A549 (cell line): ENCODE measurements at regions of chr17 and their contacts with region 1.

Region 1: GRCh38 chr17:36629252-36629847 is 28.0 kb downstream of the MRM1 start:
- DNase-seq: peak; percentile 81 to 90
- ATAC-seq: peak; percentile 87 to 95
- H3K4me3 ChIP-seq: no peak overlapping the region
- H3K27ac ChIP-seq: 0 out of 6 replicates have a peak overlapping the region, but pooled peaks of 1 of the 2 experiments have one; percentile 26
- H3K4me1 ChIP-seq: no peaks in the 10 kb centered on the region
- CTCF ChIP-seq: peak; percentile 96
- EP300 ChIP-seq: no peak
- POLR2A ChIP-seq: no peak
- RAD21 ChIP-seq: peak; percentile 98 to 99

Region 2: GRCh38 chr17:36545465-36546417 is 83.6 kb before region 1 on chr17:
- CTCF ChIA-PET with region 1: no interaction called
- POLR2A ChIA-PET with region 1: no interaction called
- DNase-seq: peak; percentile 98 to 99
- ATAC-seq: peak; percentile 83 to 89
- H3K4me3 ChIP-seq: peak overlapping the region; percentile 81
- H3K27ac ChIP-seq: peak overlapping the region; percentile 96 to 97
- H3K4me1 ChIP-seq: peaks cover 28% of the 10 kb centered on the region
- CTCF ChIP-seq: no peak
- EP300 ChIP-seq: no peak
- POLR2A ChIP-seq: peak; percentile 44
- RAD21 ChIP-seq: no peak

Region 3: DNA sequence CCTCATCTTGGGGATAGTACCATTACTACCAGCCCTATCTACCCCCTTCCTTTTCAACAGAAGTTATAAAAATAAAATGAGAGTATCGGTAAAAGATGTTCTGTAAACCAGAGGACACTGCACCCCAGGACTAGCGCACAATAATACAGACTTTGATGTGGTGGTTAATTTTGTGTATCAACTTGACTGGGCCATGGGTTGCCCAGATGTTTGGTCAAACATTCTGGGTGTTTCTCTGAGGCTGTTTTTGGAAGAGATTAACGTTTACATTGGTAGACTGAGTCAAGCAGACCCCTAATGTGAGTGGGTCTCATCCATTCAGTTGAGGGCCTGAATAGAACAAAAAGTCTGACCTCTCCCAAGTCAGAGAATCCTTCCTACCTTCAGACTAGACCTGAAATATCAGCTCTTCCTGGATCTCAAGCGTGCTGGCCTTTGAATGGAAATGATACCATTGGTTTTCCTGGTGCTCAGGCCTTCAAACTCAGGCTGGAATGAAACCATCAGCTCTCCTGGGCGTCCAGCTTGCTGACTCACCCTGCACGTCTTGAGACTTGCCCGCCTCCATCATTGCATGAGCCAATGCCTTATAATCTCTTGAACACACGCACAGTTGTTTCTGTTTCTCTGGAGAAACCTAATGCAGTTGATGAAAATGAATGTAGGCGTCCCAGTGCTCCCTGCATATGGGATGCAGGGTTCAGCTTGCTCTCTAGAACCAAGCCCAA is 17.8 kb before region 1 on chr17:
- CTCF ChIA-PET with region 1: interaction called, 112 read pairs
- POLR2A ChIA-PET with region 1: no interaction called
- DNase-seq: peak in 1 of 2 experiments; percentile 61
- ATAC-seq: peak in 1 of 2 experiments; percentile 33; a peak in 2 of 6 replicates
- H3K4me3 ChIP-seq: no peak overlapping the region
- H3K27ac ChIP-seq: peak overlapping the region in 1 of 2 experiments; percentile 27; a peak in 1 of 6 replicates
- H3K4me1 ChIP-seq: peaks cover 23% of the 10 kb centered on the region
- CTCF ChIP-seq: no peak
- EP300 ChIP-seq: no peak
- POLR2A ChIP-seq: no peak
- RAD21 ChIP-seq: no peak

Region 4: GRCh38 chr17:36665417-36665816 is 36.1 kb after region 1 on chr17:
- CTCF ChIA-PET with region 1: interaction called, 12 read pairs
- POLR2A ChIA-PET with region 1: no interaction called
- DNase-seq: peak; percentile 51 to 60
- ATAC-seq: peak; percentile 67 to 81
- H3K4me3 ChIP-seq: no peak overlapping the region
- H3K27ac ChIP-seq: peak overlapping the region in 1 of 2 experiments; percentile 25; a peak in 1 of 6 replicates
- H3K4me1 ChIP-seq: peaks cover 11% of the 10 kb centered on the region
- CTCF ChIP-seq: no peak
- EP300 ChIP-seq: no peak
- POLR2A ChIP-seq: no peak
- RAD21 ChIP-seq: no peak

Region 5: GRCh38 chr17:37174205-37174604 is 544.9 kb after region 1 on chr17:
- CTCF ChIA-PET with region 1: interaction called, 53 read pairs
- POLR2A ChIA-PET with region 1: no interaction called
- DNase-seq: peak; percentile 48 to 70
- ATAC-seq: peak; percentile 95 to 97
- H3K4me3 ChIP-seq: no peak overlapping the region
- H3K27ac ChIP-seq: no peak overlapping the region
- H3K4me1 ChIP-seq: 0 out of 3 replicates have a peak, but pooled peaks cover under 1% of the 10 kb centered on the region
- CTCF ChIP-seq: peak; percentile 60
- EP300 ChIP-seq: no peak
- POLR2A ChIP-seq: no peak
- RAD21 ChIP-seq: peak; percentile 65 to 68